K562 (cell line): ENCODE measurements at regions of chr10 and their contacts with region 1.

Region 1: DNA sequence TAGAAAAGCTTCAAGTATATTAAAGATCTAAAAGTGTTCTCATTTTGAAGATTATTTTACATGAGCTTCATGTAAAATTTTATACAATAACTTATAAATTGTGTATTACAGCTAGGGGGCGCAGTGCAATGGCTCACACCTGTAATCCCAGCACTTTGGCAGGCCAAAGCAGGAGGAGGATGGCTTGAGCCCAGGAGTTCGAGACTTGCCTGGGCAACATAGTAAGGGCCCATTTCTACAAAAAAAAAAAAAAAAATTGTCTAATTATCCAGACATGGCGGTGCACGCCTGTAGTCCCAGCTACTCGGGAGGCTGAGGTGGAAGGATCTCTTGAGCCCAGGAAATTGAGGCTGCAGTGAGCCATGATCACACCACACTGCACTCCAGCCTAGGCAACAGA is 16.6 kb downstream of the ACBD5 start:
- DNase-seq: peak in 3 of 4 experiments; percentile 11 to 54 (median 12)
- ATAC-seq: peak; percentile 87
- H3K4me3 ChIP-seq: no peak overlapping the region
- H3K27ac ChIP-seq: no peak overlapping the region
- H3K4me1 ChIP-seq: no peaks in the 10 kb centered on the region
- H3K27me3 ChIP-seq: no peaks in the 10 kb centered on the region
- CTCF ChIP-seq: peak; percentile 47 to 68 (median 67)
- EP300 ChIP-seq: no peak
- POLR2A ChIP-seq: no peak
- RAD21 ChIP-seq: peak in 1 of 2 experiments; percentile 31; a peak in 1 of 4 replicates

Region 2: DNA sequence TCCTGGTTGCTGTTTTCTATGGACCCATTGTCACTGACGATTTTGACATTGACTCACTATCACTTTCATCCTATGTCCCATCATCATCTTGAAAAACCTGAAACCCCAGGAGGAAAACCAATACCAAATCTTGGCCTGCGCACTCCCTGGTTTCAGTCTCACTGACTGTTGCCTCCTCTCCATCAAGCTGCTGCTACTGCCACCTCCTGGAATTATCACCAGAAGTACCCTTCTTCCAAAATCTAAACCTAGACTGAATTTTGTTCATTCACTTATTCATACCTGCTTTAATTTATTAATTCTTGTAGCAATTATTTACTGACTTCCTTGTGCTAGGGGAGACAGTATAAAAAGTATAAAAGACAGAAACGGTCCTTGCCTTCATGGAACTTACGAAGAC is 61.1 kb after region 1 on chr10:
- CTCF ChIA-PET with region 1: no interaction called
- POLR2A ChIA-PET with region 1: no interaction called
- in situ Hi-C with region 1: no loop called
- intact Hi-C with region 1: loop called (anchors 2 kb)
- DNase-seq: peak in 2 of 4 experiments; percentile 19 to 30
- ATAC-seq: peak; percentile 84
- H3K4me3 ChIP-seq: no peak overlapping the region
- H3K27ac ChIP-seq: no peak overlapping the region
- H3K4me1 ChIP-seq: no peaks in the 10 kb centered on the region
- H3K27me3 ChIP-seq: peaks cover 2 to 7% of the 10 kb centered on the region in 2 experiments; a peak in 2 of 5 replicates
- CTCF ChIP-seq: peak in 2 of 3 experiments; percentile 38 to 54; a peak in 5 of 6 replicates
- EP300 ChIP-seq: no peak
- POLR2A ChIP-seq: no peak
- RAD21 ChIP-seq: peak in 1 of 2 experiments; percentile 26; a peak in 2 of 4 replicates